ENCODE measurements at regions of chr12 and their contacts with region 1.

Region 1: GRCh38 chr12:120012067-120012621 is 23.1 kb downstream of the BICDL1 start:
- DNase-seq: peak; percentile 88
- H3K4me3 Mint-ChIP-seq: peak overlapping the region; percentile 70
- H3K27ac Mint-ChIP-seq: peak overlapping the region; percentile 96
- H3K4me1 Mint-ChIP-seq: peaks cover 88% of the 10 kb centered on the region
- H3K27me3 Mint-ChIP-seq: peaks cover 2% of the 10 kb centered on the region

Region 2: DNA sequence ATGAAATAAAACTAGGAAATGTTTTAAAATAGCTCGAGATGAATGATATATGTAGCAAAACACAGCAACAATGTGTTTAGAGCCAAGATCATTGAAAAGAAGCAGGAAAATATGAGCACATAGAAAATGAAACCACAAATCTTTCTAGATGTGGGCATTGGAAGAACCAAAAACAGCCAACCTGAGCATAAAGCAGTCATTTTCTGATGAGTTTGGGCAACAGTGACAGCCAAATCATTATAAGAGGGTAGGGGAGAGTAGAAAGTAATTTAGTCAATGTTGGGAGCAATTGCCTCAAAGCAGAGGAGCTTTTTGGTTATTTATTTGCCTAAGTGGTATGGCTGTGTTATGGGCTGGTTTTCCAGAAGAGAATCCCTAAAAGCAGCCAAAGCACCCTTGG is 31.9 kb before region 1 on chr12:
- CTCF ChIA-PET with region 1: no interaction called
- POLR2A ChIA-PET with region 1: interaction called, 19 read pairs
- intact Hi-C with region 1: loop called (anchors 1 kb)
- DNase-seq: no peak
- H3K4me3 Mint-ChIP-seq: peak overlapping the region; percentile 53
- H3K27ac Mint-ChIP-seq: peak overlapping the region; percentile 82
- H3K4me1 Mint-ChIP-seq: peaks cover 20% of the 10 kb centered on the region
- H3K27me3 Mint-ChIP-seq: peaks cover 2% of the 10 kb centered on the region

Region 3: GRCh38 chr12:120086801-120087621 is 74.9 kb after region 1 on chr12:
- CTCF ChIA-PET with region 1: interaction called, 16 read pairs
- POLR2A ChIA-PET with region 1: interaction called, 14 read pairs
- intact Hi-C with region 1: loop called (anchors 1 kb)
- DNase-seq: peak; percentile 100
- H3K4me3 Mint-ChIP-seq: peak overlapping the region; percentile 64
- H3K27ac Mint-ChIP-seq: peak overlapping the region; percentile 87
- H3K4me1 Mint-ChIP-seq: peaks cover 38% of the 10 kb centered on the region
- H3K27me3 Mint-ChIP-seq: no peaks in the 10 kb centered on the region

Region 4: DNA sequence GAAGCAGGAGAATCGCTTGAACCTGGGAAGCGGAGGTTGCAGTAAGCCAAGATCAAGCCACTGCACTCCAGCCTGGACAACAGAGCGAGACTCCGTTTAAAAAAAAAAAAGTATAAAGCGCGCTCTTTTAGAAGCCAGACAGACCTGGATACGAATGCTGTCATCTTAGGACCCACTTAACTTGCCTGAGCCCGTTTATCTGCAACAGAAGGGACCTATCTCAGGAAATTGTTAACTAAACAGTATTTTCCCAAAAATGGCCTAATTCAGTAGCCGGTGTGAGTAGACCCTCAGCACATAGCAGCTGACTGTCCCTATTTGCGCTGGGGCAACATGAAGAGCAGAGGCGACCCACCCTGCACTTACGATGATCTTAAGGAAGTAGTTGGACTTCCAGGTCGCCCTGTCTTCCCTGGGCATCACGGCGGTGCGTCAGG is 188.2 kb after region 1 on chr12:
- CTCF ChIA-PET with region 1: interaction called, 3 read pairs
- POLR2A ChIA-PET with region 1: interaction called, 13 read pairs
- intact Hi-C with region 1: loop called (anchors 1 kb)
- DNase-seq: no peak
- H3K4me3 Mint-ChIP-seq: peak overlapping the region; percentile 96
- H3K27ac Mint-ChIP-seq: peak overlapping the region; percentile 99
- H3K4me1 Mint-ChIP-seq: peaks cover 41% of the 10 kb centered on the region
- H3K27me3 Mint-ChIP-seq: no peaks in the 10 kb centered on the region

Measured in activated CD4-positive, alpha-beta memory T cell treated with anti-CD3 and anti-CD28 coated beads for 36 hours (primary cell).